CD4-positive, alpha-beta memory T cell (primary cell): ENCODE measurements at regions of chr22 and their contacts with region 1.

Region 1: GRCh38 chr22:28741758-28742561 is at the starts of genes CHEK2 and HSCB:
- DNase-seq: peak; percentile 95 to 99 (median 96)
- H3K4me3 ChIP-seq: peak within 1 kb of the TSS; percentile 91 to 98
- H3K4me3 Mint-ChIP-seq: peak within 1 kb of the TSS; percentile 85 to 99 (median 89)
- H3K27ac ChIP-seq: peak within 1 kb of the TSS; percentile 92
- H3K27ac Mint-ChIP-seq: peak within 1 kb of the TSS; percentile 85 to 99 (median 90)
- H3K4me1 ChIP-seq: peaks cover 12% of the 10 kb centered on the region
- H3K4me1 Mint-ChIP-seq: peaks cover 17 to 34% (median 21%) of the 10 kb centered on the region in 4 donors
- H3K27me3 ChIP-seq: no peaks in the 10 kb centered on the region
- H3K27me3 Mint-ChIP-seq: no peaks in the 10 kb centered on the region
- total RNA-seq, gene CHEK2: 7.6 to 9.2 TPM
- total RNA-seq, gene HSCB: 9.3 to 11.1 TPM

Region 2: GRCh38 chr22:28674121-28674563 is 67.8 kb before region 1 on chr22:
- CTCF ChIA-PET with region 1: no interaction called
- POLR2A ChIA-PET with region 1: no interaction called
- intact Hi-C with region 1: loop called (anchors 5 kb)
- DNase-seq: peak; percentile 68 to 72 (median 69)
- H3K4me3 ChIP-seq: no peak overlapping the region
- H3K4me3 Mint-ChIP-seq: peak overlapping the region; percentile 70 to 95 (median 86)
- H3K27ac ChIP-seq: no peak overlapping the region
- H3K27ac Mint-ChIP-seq: peak overlapping the region in 6 of 7 donors; percentile 95 to 100 (median 98)
- H3K4me1 ChIP-seq: peaks cover 36% of the 10 kb centered on the region
- H3K4me1 Mint-ChIP-seq: peaks cover 16 to 39% (median 23%) of the 10 kb centered on the region in 4 donors
- H3K27me3 ChIP-seq: peaks cover 36% of the 10 kb centered on the region
- H3K27me3 Mint-ChIP-seq: peaks cover 38 to 49% of the 10 kb centered on the region in 2 donors

Region 3: GRCh38 chr22:28772633-28773460 is 30.9 kb after region 1 on chr22 and contains the start of gene CCDC117:
- CTCF ChIA-PET with region 1: interaction called, 5 read pairs
- POLR2A ChIA-PET with region 1: interaction called, 10 read pairs
- intact Hi-C with region 1: loop called (anchors 1 kb)
- DNase-seq: peak; percentile 87 to 96 (median 88)
- H3K4me3 ChIP-seq: peak within 1 kb of the TSS; percentile 72 to 86
- H3K4me3 Mint-ChIP-seq: peak within 1 kb of the TSS; percentile 93 to 99 (median 96)
- H3K27ac ChIP-seq: peak within 1 kb of the TSS; percentile 84
- H3K27ac Mint-ChIP-seq: peak within 1 kb of the TSS; percentile 89 to 97 (median 94)
- H3K4me1 ChIP-seq: peaks cover 35% of the 10 kb centered on the region
- H3K4me1 Mint-ChIP-seq: peaks cover 17 to 36% (median 25%) of the 10 kb centered on the region in 4 donors
- H3K27me3 ChIP-seq: no peaks in the 10 kb centered on the region
- H3K27me3 Mint-ChIP-seq: no peaks in the 10 kb centered on the region
- total RNA-seq, gene CCDC117: 20.3 to 20.6 TPM

Region 4: GRCh38 chr22:28882878-28883656 is 141.1 kb after region 1 on chr22 and contains the start of gene ZNRF3:
- CTCF ChIA-PET with region 1: no interaction called
- POLR2A ChIA-PET with region 1: interaction called, 3 read pairs
- intact Hi-C with region 1: loop called (anchors 1 kb)
- DNase-seq: peak; percentile 86 to 90 (median 87)
- H3K4me3 ChIP-seq: peak within 1 kb of the TSS; percentile 61 to 83
- H3K4me3 Mint-ChIP-seq: peak within 1 kb of the TSS; percentile 88 to 92 (median 90)
- H3K27ac ChIP-seq: no peak within 1 kb of the TSS
- H3K27ac Mint-ChIP-seq: peak within 1 kb of the TSS; percentile 74 to 87 (median 81)
- H3K4me1 ChIP-seq: peaks cover 15% of the 10 kb centered on the region
- H3K4me1 Mint-ChIP-seq: peaks cover 9 to 32% (median 21%) of the 10 kb centered on the region in 4 donors
- H3K27me3 ChIP-seq: no peaks in the 10 kb centered on the region
- H3K27me3 Mint-ChIP-seq: peaks cover 5 to 7% of the 10 kb centered on the region in 2 donors
- total RNA-seq, gene ZNRF3: 0.70 to 0.89 TPM

Region 5: DNA sequence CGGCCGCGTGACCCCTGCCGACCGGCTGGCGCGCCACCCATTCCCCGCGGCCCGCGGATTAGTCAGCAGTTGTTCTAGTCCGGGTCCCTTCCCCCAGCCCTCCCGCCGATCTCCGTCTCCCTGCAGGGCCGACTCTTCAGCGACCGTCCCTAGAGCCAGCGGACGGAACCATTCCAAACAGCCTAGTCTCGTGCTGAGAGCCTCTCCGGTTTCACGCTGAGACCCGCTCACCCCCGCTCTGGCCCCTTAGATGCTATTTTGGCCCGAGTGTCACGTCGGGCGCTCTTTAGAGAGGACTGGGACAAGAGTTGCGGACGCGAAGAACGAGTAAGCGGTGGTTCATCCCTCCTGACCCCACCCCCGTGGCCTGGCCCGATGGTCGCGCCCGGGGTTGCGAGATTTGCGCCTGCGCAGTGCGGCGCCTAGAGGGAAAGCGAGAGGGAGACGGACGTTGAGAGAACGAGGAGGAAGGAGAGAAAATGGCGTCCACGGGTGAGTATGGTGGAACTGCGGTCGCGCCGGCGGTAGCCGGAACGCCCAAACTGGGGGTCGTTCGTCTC is 526.0 kb after region 1 on chr22 and contains the starts of genes EWSR1 and RHBDD3:
- CTCF ChIA-PET with region 1: no interaction called
- POLR2A ChIA-PET with region 1: no interaction called
- intact Hi-C with region 1: loop called (anchors 2 kb)
- DNase-seq: peak; percentile 95 to 100 (median 96)
- H3K4me3 ChIP-seq: peak within 1 kb of the TSS; percentile 78 to 79
- H3K4me3 Mint-ChIP-seq: peak within 1 kb of the TSS; percentile 91 to 99 (median 98)
- H3K27ac ChIP-seq: peak within 1 kb of the TSS; percentile 99
- H3K27ac Mint-ChIP-seq: peak within 1 kb of the TSS; percentile 97 to 100 (median 99)
- H3K4me1 ChIP-seq: peaks cover 54% of the 10 kb centered on the region
- H3K4me1 Mint-ChIP-seq: peaks cover 37 to 63% (median 47%) of the 10 kb centered on the region in 4 donors
- H3K27me3 ChIP-seq: no peaks in the 10 kb centered on the region
- H3K27me3 Mint-ChIP-seq: no peaks in the 10 kb centered on the region
- total RNA-seq, gene EWSR1: 247 to 250 TPM
- total RNA-seq, gene RHBDD3: 14.2 to 16.1 TPM

Region 6: DNA sequence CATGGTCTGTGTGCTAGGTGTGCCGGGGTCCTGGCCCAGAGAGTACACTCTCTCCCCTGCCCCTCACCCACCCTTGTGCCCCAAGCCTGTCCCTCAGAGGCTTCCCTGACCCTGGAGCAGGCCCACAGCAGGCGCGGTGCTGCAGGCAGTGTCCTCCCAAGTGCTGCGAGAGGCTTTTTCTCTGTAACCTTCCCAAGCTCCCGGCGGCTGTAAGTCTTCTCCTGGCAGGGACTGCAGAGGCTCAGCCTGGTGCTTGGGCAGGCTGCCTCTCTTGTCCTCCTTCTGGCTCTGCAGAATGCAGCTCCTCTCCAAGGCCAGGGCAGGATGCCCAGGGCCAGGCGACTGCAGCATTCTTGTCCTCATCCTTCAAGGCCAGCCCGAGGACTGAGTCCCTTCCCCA is 712.3 kb after region 1 on chr22:
- CTCF ChIA-PET with region 1: no interaction called
- POLR2A ChIA-PET with region 1: no interaction called
- intact Hi-C with region 1: no loop called
- DNase-seq: no peak
- H3K4me3 ChIP-seq: no peak overlapping the region
- H3K4me3 Mint-ChIP-seq: no peak overlapping the region
- H3K27ac ChIP-seq: no peak overlapping the region
- H3K27ac Mint-ChIP-seq: no peak overlapping the region
- H3K4me1 ChIP-seq: no peaks in the 10 kb centered on the region
- H3K4me1 Mint-ChIP-seq: no peaks in the 10 kb centered on the region
- H3K27me3 ChIP-seq: no peaks in the 10 kb centered on the region
- H3K27me3 Mint-ChIP-seq: no peaks in the 10 kb centered on the region